WTC11 (cell line): ENCODE measurements at regions of chr6 and their contacts with region 1.

Region 1: GRCh38 chr6:169831450-169832246 is 80.2 kb downstream of the ERMARD start:
- DNase-seq: peak; percentile 91
- ATAC-seq: peak; percentile 84
- H3K4me3 Mint-ChIP-seq: no peak overlapping the region
- H3K27ac Mint-ChIP-seq: no peak overlapping the region
- H3K4me1 Mint-ChIP-seq: peaks cover 42% of the 10 kb centered on the region
- H3K27me3 Mint-ChIP-seq: peaks cover 13% of the 10 kb centered on the region
- CTCF ChIP-seq: peak; percentile 97

Region 2: GRCh38 chr6:169789982-169790927 is 41.4 kb before region 1 on chr6:
- CTCF ChIA-PET with region 1: interaction called, 58 read pairs
- POLR2A ChIA-PET with region 1: interaction called, 3 read pairs
- DNase-seq: peak; percentile 82
- ATAC-seq: peak; percentile 96
- H3K4me3 Mint-ChIP-seq: peak overlapping the region; percentile 65
- H3K27ac Mint-ChIP-seq: no peak overlapping the region
- H3K4me1 Mint-ChIP-seq: peaks cover 16% of the 10 kb centered on the region; the same call in 1 of the 2 replicates
- H3K27me3 Mint-ChIP-seq: peaks cover 31% of the 10 kb centered on the region
- CTCF ChIP-seq: peak; percentile 88

Region 3: GRCh38 chr6:169810066-169810989 is 21.3 kb before region 1 on chr6:
- CTCF ChIA-PET with region 1: interaction called, 47 read pairs
- POLR2A ChIA-PET with region 1: no interaction called
- DNase-seq: peak; percentile 70
- ATAC-seq: peak; percentile 100
- H3K4me3 Mint-ChIP-seq: no peak overlapping the region
- H3K27ac Mint-ChIP-seq: no peak overlapping the region
- H3K4me1 Mint-ChIP-seq: peaks cover 12% of the 10 kb centered on the region
- H3K27me3 Mint-ChIP-seq: peaks cover 22% of the 10 kb centered on the region
- CTCF ChIP-seq: no peak

Region 4: DNA sequence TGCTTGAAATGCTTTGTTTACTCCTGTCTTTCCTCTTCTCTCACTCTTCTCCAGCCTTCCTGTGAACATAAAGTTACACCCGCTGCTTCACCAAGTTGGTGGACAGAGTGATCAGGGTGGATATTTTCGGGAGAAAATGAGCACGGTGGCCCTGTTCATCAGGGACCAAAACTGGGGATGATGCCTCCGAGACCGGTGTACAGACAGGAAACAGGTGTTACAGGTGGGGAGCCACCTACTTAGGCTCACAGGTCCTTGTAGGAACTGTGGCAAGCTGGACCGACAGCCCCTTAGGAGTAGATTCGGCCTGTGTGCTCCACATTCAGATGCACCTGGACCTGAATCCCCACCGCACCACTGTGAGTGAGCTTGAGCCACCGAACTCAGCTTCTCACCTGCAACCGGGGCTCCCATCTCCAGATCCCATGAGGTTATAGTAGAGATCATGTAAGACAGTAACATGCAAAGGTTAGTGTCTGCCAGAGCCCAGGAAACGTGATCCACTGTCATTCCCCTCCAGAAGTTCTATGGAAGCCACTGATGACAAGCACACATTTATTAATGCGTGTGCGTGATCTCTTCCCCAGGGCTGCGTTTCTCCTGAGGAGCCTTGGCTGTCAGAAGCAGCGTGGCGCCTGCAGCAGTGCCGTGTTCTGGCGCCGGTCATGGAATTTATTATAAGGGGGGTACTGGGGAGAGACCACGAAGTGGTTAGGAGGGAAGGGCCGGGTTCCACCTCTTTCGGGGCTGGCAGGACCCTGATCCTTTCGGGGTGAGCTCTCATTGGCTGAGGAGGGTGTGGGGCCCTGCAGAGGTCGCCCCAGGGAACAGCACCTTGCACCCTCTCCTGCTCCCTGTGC is 14.0 kb after region 1 on chr6:
- CTCF ChIA-PET with region 1: interaction called, 46 read pairs
- POLR2A ChIA-PET with region 1: no interaction called
- DNase-seq: no peak
- ATAC-seq: no peak
- H3K4me3 Mint-ChIP-seq: no peak overlapping the region
- H3K27ac Mint-ChIP-seq: no peak overlapping the region
- H3K4me1 Mint-ChIP-seq: 0 out of 2 replicates have a peak, but pooled peaks cover 3% of the 10 kb centered on the region
- H3K27me3 Mint-ChIP-seq: no peaks in the 10 kb centered on the region
- CTCF ChIP-seq: no peak

Region 5: GRCh38 chr6:169881976-169882375 is 50.3 kb after region 1 on chr6:
- CTCF ChIA-PET with region 1: interaction called, 15 read pairs
- POLR2A ChIA-PET with region 1: no interaction called
- DNase-seq: no peak
- ATAC-seq: no peak
- H3K4me3 Mint-ChIP-seq: no peak overlapping the region
- H3K27ac Mint-ChIP-seq: no peak overlapping the region
- H3K4me1 Mint-ChIP-seq: peaks cover 13% of the 10 kb centered on the region
- H3K27me3 Mint-ChIP-seq: no peaks in the 10 kb centered on the region
- CTCF ChIP-seq: no peak

Region 6: GRCh38 chr6:169961772-169962561 is 130.3 kb after region 1 on chr6:
- CTCF ChIA-PET with region 1: interaction called, 11 read pairs
- POLR2A ChIA-PET with region 1: no interaction called
- DNase-seq: peak; percentile 70
- ATAC-seq: peak; percentile 78
- H3K4me3 Mint-ChIP-seq: peak overlapping the region; percentile 51
- H3K27ac Mint-ChIP-seq: no peak overlapping the region
- H3K4me1 Mint-ChIP-seq: peaks cover 6% of the 10 kb centered on the region; the same call in 1 of the 2 replicates
- H3K27me3 Mint-ChIP-seq: peaks cover 7% of the 10 kb centered on the region
- CTCF ChIP-seq: no peak

Region 7: GRCh38 chr6:170291271-170292110 is 459.8 kb after region 1 on chr6:
- CTCF ChIA-PET with region 1: interaction called, 12 read pairs
- POLR2A ChIA-PET with region 1: no interaction called
- DNase-seq: peak; percentile 91
- ATAC-seq: peak; percentile 54
- H3K4me3 Mint-ChIP-seq: peak overlapping the region; percentile 88
- H3K27ac Mint-ChIP-seq: peak overlapping the region; percentile 93
- H3K4me1 Mint-ChIP-seq: peaks cover 56% of the 10 kb centered on the region
- H3K27me3 Mint-ChIP-seq: peaks cover 81% of the 10 kb centered on the region
- CTCF ChIP-seq: no peak